Activated CD4-positive, alpha-beta T cell treated with anti-CD3 and anti-CD28 coated beads for 36 hours (primary cell): ENCODE measurements at regions of chr12 and their contacts with region 1.

Region 1: GRCh38 chr12:111396726-111397445 is 8.8 kb upstream of the SH2B3 start:
- DNase-seq: peak; percentile 94
- ATAC-seq: peak; percentile 82
- H3K4me3 Mint-ChIP-seq: peak overlapping the region; percentile 61
- H3K27ac Mint-ChIP-seq: peak overlapping the region; percentile 70
- H3K4me1 Mint-ChIP-seq: peaks cover 28% of the 10 kb centered on the region
- H3K27me3 Mint-ChIP-seq: peaks cover 5% of the 10 kb centered on the region

Region 2: GRCh38 chr12:110874781-110875180 is 522.1 kb before region 1 on chr12:
- CTCF ChIA-PET with region 1: no interaction called
- POLR2A ChIA-PET with region 1: no interaction called
- intact Hi-C with region 1: no loop called
- DNase-seq: no peak
- ATAC-seq: no peak
- H3K4me3 Mint-ChIP-seq: no peak overlapping the region
- H3K27ac Mint-ChIP-seq: no peak overlapping the region
- H3K4me1 Mint-ChIP-seq: no peaks in the 10 kb centered on the region
- H3K27me3 Mint-ChIP-seq: peaks cover 4% of the 10 kb centered on the region

Region 3: GRCh38 chr12:111201036-111201435 is 195.8 kb before region 1 on chr12:
- CTCF ChIA-PET with region 1: no interaction called
- POLR2A ChIA-PET with region 1: no interaction called
- intact Hi-C with region 1: no loop called
- DNase-seq: no peak
- ATAC-seq: no peak
- H3K4me3 Mint-ChIP-seq: no peak overlapping the region
- H3K27ac Mint-ChIP-seq: no peak overlapping the region
- H3K4me1 Mint-ChIP-seq: no peaks in the 10 kb centered on the region
- H3K27me3 Mint-ChIP-seq: peaks cover 11% of the 10 kb centered on the region

Region 4: DNA sequence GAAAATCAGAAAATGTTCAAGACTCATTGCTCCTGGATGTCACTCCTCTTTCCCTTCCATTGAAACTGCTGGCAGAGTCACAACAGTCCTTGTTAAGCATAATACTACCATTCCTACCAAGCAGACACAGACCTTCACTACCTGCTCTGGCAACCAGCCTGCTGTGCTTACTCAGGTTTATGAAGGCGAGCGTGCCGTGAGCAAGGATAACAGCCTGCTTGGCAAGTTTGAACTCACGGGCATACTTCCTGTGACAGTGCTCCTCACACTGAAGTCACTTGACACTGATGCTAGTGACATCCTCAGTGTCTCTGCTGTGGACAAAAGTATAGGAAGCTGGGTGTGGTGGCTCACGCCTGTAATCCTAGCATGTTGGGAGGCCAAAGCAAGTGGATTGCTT is 12.3 kb before region 1 on chr12:
- CTCF ChIA-PET with region 1: interaction called, 12 read pairs
- POLR2A ChIA-PET with region 1: no interaction called
- intact Hi-C with region 1: no loop called
- DNase-seq: no peak
- ATAC-seq: no peak
- H3K4me3 Mint-ChIP-seq: no peak overlapping the region
- H3K27ac Mint-ChIP-seq: no peak overlapping the region
- H3K4me1 Mint-ChIP-seq: no peaks in the 10 kb centered on the region
- H3K27me3 Mint-ChIP-seq: peaks cover 3% of the 10 kb centered on the region

Region 5: DNA sequence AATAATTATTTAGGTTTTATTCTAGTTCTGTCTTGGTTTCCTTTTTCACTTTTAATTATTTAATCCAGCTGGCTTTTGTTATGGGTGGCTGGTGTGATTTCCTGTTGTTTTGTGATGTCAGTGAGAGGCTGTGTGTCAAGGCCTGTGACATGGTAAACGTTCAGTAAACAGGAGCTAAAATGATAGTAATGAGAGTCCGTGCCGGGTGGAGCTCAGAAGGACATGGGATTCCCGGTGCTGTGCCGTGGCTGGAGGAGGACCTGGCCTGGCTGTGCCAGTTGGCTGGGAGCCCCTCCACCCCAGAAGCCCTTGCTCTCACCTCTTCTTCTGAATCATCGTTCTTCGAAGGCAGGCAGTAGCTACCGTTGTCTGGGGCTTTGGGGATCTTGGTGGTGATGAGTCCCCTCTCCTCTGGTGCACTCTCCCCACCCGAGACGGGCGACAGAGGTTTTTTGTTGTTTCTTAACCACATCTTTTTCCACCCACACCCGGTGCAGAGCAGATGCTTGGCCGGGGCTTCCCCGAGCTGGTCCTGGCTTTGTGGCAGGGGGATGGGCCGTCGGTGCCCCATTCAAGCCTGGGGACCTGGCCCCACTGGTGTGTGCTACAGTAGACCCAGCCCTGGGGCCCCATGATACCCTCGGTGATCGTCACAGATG is 37.9 kb after region 1 on chr12:
- CTCF ChIA-PET with region 1: interaction called, 22 read pairs
- POLR2A ChIA-PET with region 1: interaction called, 3 read pairs
- intact Hi-C with region 1: no loop called
- DNase-seq: peak; percentile 88
- ATAC-seq: peak; percentile 80
- H3K4me3 Mint-ChIP-seq: peak overlapping the region; percentile 35
- H3K27ac Mint-ChIP-seq: peak overlapping the region; percentile 81
- H3K4me1 Mint-ChIP-seq: peaks cover 89% of the 10 kb centered on the region
- H3K27me3 Mint-ChIP-seq: no peaks in the 10 kb centered on the region

Region 6: DNA sequence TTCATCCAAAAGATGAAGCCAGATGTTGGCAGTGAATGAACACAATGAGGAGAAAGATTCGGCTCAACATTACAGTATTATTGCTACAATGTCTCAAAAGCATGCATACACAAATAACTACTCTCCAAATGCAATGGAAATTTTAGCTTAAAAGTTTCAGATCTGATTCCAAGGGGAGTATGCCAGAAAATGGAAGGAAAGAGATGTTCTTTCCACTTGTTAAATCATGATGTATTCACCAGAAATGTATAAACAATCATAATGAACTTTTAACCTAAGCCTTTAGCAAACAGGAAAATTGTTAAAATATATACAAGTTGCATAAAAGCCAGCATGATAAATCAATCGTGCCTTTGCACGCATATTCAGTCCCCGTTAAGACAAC is 71.0 kb after region 1 on chr12:
- CTCF ChIA-PET with region 1: interaction called, 890 read pairs
- POLR2A ChIA-PET with region 1: no interaction called
- intact Hi-C with region 1: no loop called
- DNase-seq: no peak
- ATAC-seq: no peak
- H3K4me3 Mint-ChIP-seq: no peak overlapping the region
- H3K27ac Mint-ChIP-seq: no peak overlapping the region
- H3K4me1 Mint-ChIP-seq: peaks cover 4% of the 10 kb centered on the region
- H3K27me3 Mint-ChIP-seq: no peaks in the 10 kb centered on the region

Region 7: DNA sequence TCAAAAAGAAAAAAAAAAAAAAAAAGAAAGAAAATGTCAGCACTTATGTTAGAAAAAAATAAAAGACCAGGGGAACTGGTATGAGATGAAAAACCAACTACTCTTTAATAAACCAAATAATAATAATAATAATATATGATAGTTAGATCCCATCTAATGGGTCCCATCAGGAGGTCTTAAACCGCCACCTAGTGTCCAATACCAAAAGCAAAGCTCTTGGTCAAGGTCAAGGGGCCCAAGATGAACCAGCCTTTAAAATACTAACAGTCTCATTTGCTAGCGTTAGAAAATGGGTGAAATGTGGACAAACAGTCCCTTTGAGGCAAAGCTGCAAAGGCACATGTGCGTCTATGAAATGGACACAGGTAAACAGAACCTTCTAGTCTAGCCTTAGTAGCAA is 276.6 kb after region 1 on chr12:
- CTCF ChIA-PET with region 1: interaction called, 5 read pairs
- POLR2A ChIA-PET with region 1: no interaction called
- intact Hi-C with region 1: loop called in 1 of 2 experiments (anchors 1 kb)
- DNase-seq: no peak
- ATAC-seq: no peak
- H3K4me3 Mint-ChIP-seq: no peak overlapping the region
- H3K27ac Mint-ChIP-seq: no peak overlapping the region
- H3K4me1 Mint-ChIP-seq: no peaks in the 10 kb centered on the region
- H3K27me3 Mint-ChIP-seq: no peaks in the 10 kb centered on the region